Dorsolateral prefrontal cortex (tissue), 120 donors: ENCODE measurements at regions of chr6 and their contacts with region 1.

Region 1: GRCh38 chr6:44257025-44257752 is at the start of gene SLC35B2:
- DNase-seq: peak; percentile 72 to 93 (median 88)
- H3K4me3 ChIP-seq: peak within 1 kb of the TSS; percentile 68 to 94 (median 83)
- H3K27ac ChIP-seq: peak within 1 kb of the TSS; percentile 87 to 99 (median 98)
- H3K27me3 ChIP-seq: no peaks in the 10 kb centered on the region
- CTCF ChIP-seq: peak in 54 of 56 donors; percentile 16 to 95 (median 72)
- total RNA-seq, gene SLC35B2: 9.6 to 55.6 (median 23.9) TPM

Region 2: GRCh38 chr6:43977404-43978111 is 279.6 kb before region 1 on chr6:
- intact Hi-C with region 1: no loop called
- DNase-seq: peak in 3 of 10 donors; percentile 7 to 29 (median 23)
- H3K4me3 ChIP-seq: no peak overlapping the region
- H3K27ac ChIP-seq: no peak overlapping the region
- H3K27me3 ChIP-seq: no peaks in the 10 kb centered on the region
- CTCF ChIP-seq: no peak

Region 3: DNA sequence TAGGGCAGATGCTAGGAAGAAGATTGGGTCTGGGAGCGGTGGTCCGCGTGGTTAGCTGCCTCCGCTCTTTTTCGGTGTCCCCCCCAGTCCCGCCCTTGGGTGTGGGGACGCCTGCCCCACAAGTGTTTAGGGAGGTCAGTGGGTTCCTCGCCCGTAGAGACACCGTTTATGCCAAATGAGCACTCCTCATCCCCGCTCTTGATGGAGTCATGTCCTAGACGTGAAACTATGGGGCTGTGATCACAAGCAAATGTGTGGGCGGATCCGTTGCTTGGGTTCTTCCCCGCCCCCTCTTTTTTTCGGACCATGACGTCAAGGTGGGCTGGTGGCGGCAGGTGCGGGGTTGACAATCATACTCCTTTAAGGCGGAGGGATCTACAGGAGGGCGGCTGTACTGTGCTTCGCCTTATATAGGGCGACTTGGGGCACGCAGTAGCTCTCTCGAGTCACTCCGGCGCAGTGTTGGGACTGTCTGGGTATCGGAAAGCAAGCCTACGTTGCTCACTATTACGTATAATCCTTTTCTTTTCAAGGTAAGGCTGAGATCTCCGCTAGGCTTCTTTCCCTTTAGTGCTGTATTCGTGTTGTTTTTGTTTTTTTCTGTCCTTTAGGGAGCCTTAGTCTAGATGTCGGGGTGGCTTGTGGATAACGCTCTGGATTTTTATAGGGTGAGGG is 10.4 kb before region 1 on chr6 and contains the start of gene HSP90AB1:
- intact Hi-C with region 1: loop called (anchors 1 kb)
- DNase-seq: peak; percentile 89 to 98 (median 96)
- H3K4me3 ChIP-seq: peak within 1 kb of the TSS; percentile 67 to 100 (median 94)
- H3K27ac ChIP-seq: peak within 1 kb of the TSS; percentile 94 to 100 (median 100)
- H3K27me3 ChIP-seq: no peaks in the 10 kb centered on the region
- CTCF ChIP-seq: peak in 3 of 56 donors; percentile 3 to 14 (median 11)
- total RNA-seq, gene HSP90AB1: 482 to 1,543 (median 963) TPM

Region 4: GRCh38 chr6:44361947-44362346 is 104.8 kb after region 1 on chr6:
- intact Hi-C with region 1: no loop called
- DNase-seq: peak in 1 of 10 donors; percentile 29
- H3K4me3 ChIP-seq: no peak overlapping the region
- H3K27ac ChIP-seq: peak overlapping the region in 44 of 59 donors; percentile 5 to 85 (median 58)
- H3K27me3 ChIP-seq: no peaks in the 10 kb centered on the region
- CTCF ChIP-seq: no peak

Region 5: GRCh38 chr6:45132059-45132458 is 874.9 kb after region 1 on chr6:
- intact Hi-C with region 1: no loop called
- DNase-seq: no peak
- H3K4me3 ChIP-seq: no peak overlapping the region
- H3K27ac ChIP-seq: no peak overlapping the region
- H3K27me3 ChIP-seq: no peaks in the 10 kb centered on the region
- CTCF ChIP-seq: no peak